ENCODE measurements at regions of chr12 and their contacts with region 1.

Region 1: DNA sequence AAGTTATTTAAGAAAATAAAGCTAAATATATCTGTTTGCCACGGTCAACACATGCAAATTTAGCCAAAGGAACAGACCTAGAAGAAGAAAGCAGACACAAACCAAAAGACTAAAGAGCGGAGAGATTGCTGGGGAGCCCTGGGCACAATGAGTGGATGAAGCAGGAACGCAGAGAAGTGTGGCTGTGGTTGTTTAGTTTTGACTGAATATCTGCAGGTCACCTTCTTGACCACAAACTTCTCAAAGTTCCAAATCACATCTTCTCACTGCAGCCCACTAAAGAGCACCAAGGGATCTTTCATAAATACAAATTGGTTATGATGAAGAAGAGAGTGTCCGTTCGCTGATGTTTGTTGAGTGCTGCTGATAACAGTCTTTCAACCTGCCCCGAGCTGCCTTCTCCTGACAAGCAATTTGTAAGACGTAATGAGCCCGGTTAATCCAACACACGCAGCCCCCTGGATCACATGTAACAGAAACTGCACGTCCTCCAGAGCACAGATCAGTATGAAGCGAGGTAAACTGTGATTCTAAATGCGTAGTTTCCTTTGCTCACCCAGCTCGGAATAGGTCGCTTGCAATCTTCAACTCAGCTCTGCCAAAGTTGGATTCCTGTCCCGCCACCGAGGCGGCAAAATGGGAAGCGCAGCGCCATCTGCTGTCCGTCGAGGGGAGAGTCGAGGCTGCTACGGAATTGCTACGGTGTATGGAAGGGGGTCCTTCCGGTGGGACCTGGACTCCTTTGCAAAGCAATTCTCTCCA is 120.8 kb downstream of the GXYLT1 start:
- DNase-seq: peak; percentile 24
- H3K4me3 ChIP-seq: peak overlapping the region; percentile 56
- H3K27ac ChIP-seq: no peak overlapping the region
- H3K27me3 ChIP-seq: no peaks in the 10 kb centered on the region
- CTCF ChIP-seq: peak; percentile 98

Region 2: GRCh38 chr12:40959041-40959440 is 1064.9 kb before region 1 on chr12:
- CTCF ChIA-PET with region 1: interaction called, 10 read pairs
- POLR2A ChIA-PET with region 1: no interaction called
- DNase-seq: peak; percentile 6
- H3K4me3 ChIP-seq: no peak overlapping the region
- H3K27ac ChIP-seq: no peak overlapping the region
- H3K27me3 ChIP-seq: no peaks in the 10 kb centered on the region
- CTCF ChIP-seq: no peak

Region 3: GRCh38 chr12:41277116-41277945 is 746.6 kb before region 1 on chr12:
- CTCF ChIA-PET with region 1: interaction called, 125 read pairs
- POLR2A ChIA-PET with region 1: no interaction called
- DNase-seq: peak; percentile 6
- H3K4me3 ChIP-seq: no peak overlapping the region
- H3K27ac ChIP-seq: no peak overlapping the region
- H3K27me3 ChIP-seq: peaks cover 3% of the 10 kb centered on the region
- CTCF ChIP-seq: peak; percentile 73

Region 4: GRCh38 chr12:42056130-42056529 is 32.2 kb after region 1 on chr12:
- CTCF ChIA-PET with region 1: interaction called, 14 read pairs
- POLR2A ChIA-PET with region 1: no interaction called
- DNase-seq: no peak
- H3K4me3 ChIP-seq: no peak overlapping the region
- H3K27ac ChIP-seq: no peak overlapping the region
- H3K27me3 ChIP-seq: no peaks in the 10 kb centered on the region
- CTCF ChIP-seq: no peak

Region 5: DNA sequence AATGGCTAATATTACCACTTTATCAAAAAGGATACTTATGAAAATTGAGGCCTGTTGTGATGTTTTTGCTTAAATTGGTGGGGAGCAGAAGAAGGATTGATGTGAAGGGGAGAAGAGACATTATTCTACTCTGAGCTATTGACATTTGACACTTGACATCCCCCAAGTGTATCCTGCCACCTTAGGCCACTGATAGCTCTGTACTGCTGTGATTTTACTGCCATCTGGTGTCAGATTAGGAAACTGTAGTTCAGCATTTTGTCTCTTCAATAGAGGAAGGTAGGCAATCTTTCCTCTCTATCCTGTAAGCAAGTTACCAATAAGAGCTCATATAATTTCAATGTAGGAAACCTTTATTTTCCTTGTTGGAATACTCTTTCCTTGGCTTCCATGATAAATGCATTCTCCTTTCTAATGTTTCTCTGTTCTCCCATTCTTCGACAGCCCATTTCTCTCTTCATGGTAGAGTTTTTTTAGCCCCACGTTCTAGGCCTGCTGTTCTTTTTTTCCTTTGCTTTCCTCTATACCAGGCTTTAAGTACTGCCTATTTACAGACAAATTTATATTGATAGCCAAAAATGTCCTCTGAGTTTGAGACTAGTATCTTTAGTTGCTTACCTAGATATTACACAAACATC is 348.4 kb after region 1 on chr12:
- CTCF ChIA-PET with region 1: interaction called, 18 read pairs
- POLR2A ChIA-PET with region 1: no interaction called
- DNase-seq: no peak
- H3K4me3 ChIP-seq: no peak overlapping the region
- H3K27ac ChIP-seq: no peak overlapping the region
- H3K27me3 ChIP-seq: no peaks in the 10 kb centered on the region
- CTCF ChIP-seq: peak; percentile 82